ENCODE measurements at regions of chr9 and their contacts with region 1.

Region 1: GRCh38 chr9:112074250-112075008 is 100.7 kb downstream of the SUSD1 start:
- DNase-seq: peak; percentile 99
- H3K4me3 ChIP-seq: no peak overlapping the region; the same call in 1 of the 2 replicates
- CTCF ChIP-seq: peak; percentile 85

Region 2: DNA sequence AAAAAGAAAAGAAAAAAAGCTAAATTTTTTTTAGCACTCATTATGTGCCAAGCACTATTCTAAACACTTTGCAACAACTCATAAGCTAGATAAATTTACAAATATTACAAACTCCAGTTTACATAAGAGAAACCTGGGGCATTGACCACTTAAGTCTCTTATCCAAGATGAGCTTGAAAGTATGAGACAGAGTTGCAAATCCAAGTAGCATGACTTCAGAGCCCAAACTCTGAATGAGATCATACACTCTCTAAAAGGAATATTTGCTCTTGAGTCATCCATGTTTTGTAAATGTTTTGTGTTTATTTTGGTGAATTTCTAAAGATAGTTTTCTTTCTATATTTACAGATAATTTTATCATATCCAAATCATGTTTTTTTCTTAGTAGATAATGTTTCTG is 275.6 kb before region 1 on chr9:
- CTCF ChIA-PET with region 1: no interaction called
- POLR2A ChIA-PET with region 1: no interaction called
- DNase-seq: peak; percentile 38
- H3K4me3 ChIP-seq: no peak overlapping the region
- CTCF ChIP-seq: no peak

Region 3: DNA sequence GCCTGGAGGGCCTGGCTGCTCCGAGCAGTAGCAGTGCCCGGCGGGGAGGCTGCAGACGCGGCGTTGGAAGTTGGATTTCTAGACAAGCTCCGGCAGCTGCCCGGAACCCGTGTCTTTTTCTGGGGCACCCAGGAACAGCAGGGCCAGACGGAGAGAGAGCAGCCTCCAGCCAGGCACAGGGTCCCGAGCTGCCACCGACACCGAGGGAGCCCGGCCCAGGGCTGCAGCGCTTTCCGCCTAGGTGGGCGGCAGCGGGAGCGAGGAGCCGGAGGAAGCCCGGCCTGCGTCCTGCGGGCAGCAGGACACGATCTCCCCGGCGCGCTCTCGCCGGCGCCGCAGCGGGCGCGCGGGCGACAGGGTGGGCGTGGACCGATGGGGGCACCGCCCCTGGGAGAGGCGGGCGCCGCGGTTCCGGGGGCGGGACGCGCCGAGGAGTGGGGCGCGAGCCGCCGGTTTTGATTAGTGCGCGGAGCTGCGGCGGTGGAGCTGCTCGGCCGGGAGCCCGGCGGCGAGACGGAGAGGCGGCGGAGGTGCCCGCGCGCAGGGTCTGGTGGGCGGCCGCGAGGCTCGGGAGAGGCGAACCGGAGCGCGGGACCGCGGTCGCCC is 178.0 kb before region 1 on chr9 and contains the start of gene UGCG:
- CTCF ChIA-PET with region 1: interaction called, 3 read pairs
- POLR2A ChIA-PET with region 1: interaction called, 10 read pairs
- DNase-seq: no peak
- H3K4me3 ChIP-seq: peak within 1 kb of the TSS; percentile 81
- CTCF ChIP-seq: no peak

Region 4: GRCh38 chr9:111952559-111952958 is 121.9 kb before region 1 on chr9:
- CTCF ChIA-PET with region 1: interaction called, 11 read pairs
- POLR2A ChIA-PET with region 1: interaction called, 16 read pairs
- DNase-seq: no peak
- H3K4me3 ChIP-seq: no peak overlapping the region
- CTCF ChIP-seq: no peak

Region 5: DNA sequence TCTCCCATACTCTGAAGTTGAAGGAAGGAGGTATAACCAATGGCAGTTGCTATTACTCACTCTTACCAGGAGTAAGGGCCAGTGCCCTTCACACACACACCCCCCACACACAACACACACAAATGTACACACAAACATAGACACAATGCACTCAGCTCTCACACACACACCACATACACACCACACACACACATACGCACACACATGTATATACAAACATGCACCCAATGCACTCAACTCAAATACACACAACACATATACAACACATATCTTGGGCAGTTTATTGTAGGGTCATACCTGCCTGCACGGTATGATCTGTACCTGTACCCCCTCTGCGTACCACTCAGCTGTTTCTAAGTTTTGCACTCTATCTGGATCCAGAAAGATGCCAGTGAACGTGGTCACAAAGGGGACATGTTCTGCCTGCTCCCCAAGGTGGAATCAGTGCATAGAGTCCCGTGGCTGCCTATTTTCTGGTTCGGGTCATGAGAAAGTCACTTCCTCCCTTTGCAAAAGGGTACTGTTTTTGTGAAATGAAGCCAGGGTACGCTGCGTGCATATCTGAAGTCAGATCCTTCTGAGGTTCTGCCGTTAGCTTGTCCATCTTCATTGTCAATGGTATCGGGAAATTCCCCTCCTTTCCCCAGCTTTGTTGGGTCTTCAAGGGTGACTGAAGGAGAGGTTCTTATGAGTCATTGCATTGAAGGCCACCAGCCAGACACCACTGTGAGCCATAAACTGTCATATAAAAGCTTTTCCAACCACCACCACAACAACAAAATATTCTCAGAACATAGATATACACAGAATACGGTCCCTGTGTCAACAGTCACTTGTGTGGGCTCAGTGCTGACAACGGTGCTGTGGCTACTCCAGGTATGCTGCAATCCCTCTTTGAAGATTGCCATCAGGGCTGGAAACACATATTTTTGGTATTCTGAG is 45.9 kb before region 1 on chr9:
- CTCF ChIA-PET with region 1: interaction called, 13 read pairs
- POLR2A ChIA-PET with region 1: interaction called, 4 read pairs
- DNase-seq: no peak
- H3K4me3 ChIP-seq: no peak overlapping the region
- CTCF ChIP-seq: no peak

Region 6: GRCh38 chr9:112050544-112051475 is 23.6 kb before region 1 on chr9:
- CTCF ChIA-PET with region 1: interaction called, 29 read pairs
- POLR2A ChIA-PET with region 1: interaction called, 6 read pairs
- DNase-seq: peak; percentile 93
- H3K4me3 ChIP-seq: no peak overlapping the region
- CTCF ChIP-seq: no peak

Region 7: DNA sequence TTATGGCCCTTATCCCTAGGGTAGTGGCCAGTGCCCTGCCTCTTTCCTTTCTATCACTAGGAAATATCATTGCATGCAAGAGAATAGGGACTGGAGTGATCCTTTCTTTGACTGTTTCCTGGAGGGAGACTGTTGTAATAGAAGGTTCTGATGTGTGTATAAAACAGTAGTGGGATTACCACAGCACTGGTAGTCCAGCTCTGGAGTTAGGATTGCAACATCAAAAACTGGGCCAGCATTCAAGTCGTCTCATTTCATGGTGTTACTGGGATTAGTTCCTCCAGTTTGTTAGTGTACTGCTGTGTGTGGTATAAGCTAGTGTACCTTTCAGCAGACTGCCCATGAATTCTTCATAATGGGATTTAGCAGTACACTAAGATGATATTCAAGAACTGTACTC is 458.0 kb after region 1 on chr9:
- CTCF ChIA-PET with region 1: no interaction called
- POLR2A ChIA-PET with region 1: no interaction called
- DNase-seq: no peak
- H3K4me3 ChIP-seq: no peak overlapping the region
- CTCF ChIP-seq: no peak

Measured in AG04449 (cell line).